HepG2 (cell line): ENCODE measurements at regions of chr3 and their contacts with region 1.

Region 1: DNA sequence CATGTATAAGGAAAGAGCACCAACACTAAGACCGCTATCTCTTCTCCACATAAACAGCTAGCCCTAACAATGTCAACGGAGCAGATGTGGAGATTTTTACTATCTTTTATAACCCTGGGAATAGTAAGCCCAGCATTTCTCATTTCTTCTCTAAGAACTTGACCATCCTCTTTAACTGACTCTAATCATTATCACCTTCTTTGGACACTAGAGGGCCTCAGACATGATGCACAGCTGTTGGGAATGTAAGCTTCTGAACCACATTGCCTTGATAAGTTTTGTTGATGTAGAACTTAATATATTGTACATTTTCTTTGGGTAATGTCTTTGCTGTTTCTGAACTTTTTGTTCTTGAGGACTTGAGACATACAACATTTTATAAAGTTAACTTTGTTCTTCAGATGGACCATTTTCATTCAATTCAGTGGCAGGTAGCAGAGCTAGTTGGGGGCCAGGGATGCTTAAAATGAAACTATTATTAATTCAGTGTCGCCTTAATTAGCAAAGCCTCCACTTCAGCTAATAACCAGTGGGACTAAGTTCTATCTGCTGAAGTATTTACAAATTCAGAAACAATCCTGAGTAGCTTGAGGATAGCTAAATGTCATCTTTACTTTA is 9.6 kb upstream of the TAGLN3 start:
- DNase-seq: peak; percentile 53
- ATAC-seq: peak; percentile 96
- H3K4me3 ChIP-seq: no peak overlapping the region
- H3K27ac ChIP-seq: no peak overlapping the region
- H3K4me1 ChIP-seq: no peaks in the 10 kb centered on the region
- H3K27me3 ChIP-seq: no peaks in the 10 kb centered on the region
- CTCF ChIP-seq: peak; percentile 72
- EP300 ChIP-seq: no peak
- POLR2A ChIP-seq: no peak
- RAD21 ChIP-seq: peak; percentile 20; the same call in 1 of the 2 replicates

Region 2: DNA sequence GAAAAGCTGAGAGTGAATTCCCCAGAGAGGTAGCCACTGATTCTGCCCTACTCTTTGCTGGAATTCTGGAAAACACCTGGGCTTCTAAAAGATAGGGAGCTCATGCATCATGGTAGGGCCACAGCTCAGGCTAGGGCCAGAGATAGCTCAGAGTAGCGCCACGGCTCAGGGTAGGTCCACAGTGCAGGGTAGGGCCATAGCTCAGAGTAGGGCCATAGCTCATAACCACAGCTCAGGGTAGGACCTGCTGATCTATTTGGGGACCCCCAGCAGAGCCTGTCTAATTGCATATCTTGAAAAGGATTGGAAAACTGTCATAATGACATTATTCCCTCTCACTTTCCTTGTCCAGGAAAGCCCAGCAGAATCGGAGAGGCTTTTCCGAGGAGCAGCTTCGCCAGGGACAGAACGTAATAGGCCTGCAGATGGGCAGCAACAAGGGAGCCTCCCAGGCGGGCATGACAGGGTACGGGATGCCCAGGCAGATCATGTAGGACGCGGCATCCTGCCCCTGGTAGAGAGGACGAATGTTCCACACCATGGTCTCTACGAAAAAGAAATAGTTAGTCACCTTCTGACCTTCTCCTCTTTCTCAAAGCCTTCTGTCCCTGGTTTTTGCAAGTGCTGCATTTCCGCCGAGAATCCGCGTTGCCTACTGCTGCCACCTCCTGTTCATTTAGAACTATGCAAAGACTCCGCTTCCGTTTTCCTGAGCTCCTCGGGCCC is 24.1 kb after region 1 on chr3:
- CTCF ChIA-PET with region 1: interaction called, 28 read pairs
- POLR2A ChIA-PET with region 1: interaction called, 6 read pairs
- in situ Hi-C with region 1: no loop called
- intact Hi-C with region 1: loop called (anchors 1 kb)
- DNase-seq: peak; percentile 49
- ATAC-seq: peak; percentile 97
- H3K4me3 ChIP-seq: peak overlapping the region; percentile 46 to 74 (median 53); a peak in 5 of 6 replicates
- H3K27ac ChIP-seq: no peak overlapping the region
- H3K4me1 ChIP-seq: peaks cover 17% of the 10 kb centered on the region
- H3K27me3 ChIP-seq: peaks cover 0 to 5% of the 10 kb centered on the region in 2 experiments; a peak in 1 of 5 replicates
- CTCF ChIP-seq: peak; percentile 81
- EP300 ChIP-seq: no peak
- POLR2A ChIP-seq: no peak
- RAD21 ChIP-seq: peak; percentile 57